Dorsolateral prefrontal cortex (tissue), 120 donors: ENCODE measurements at regions of chr1 and their contacts with region 1.

Region 1: GRCh38 chr1:109910123-109910962 is at the start of gene CSF1:
- DNase-seq: peak; percentile 38 to 86 (median 82)
- H3K4me3 ChIP-seq: peak within 1 kb of the TSS; percentile 53 to 91 (median 80)
- H3K27ac ChIP-seq: peak within 1 kb of the TSS in 57 of 59 donors; percentile 11 to 95 (median 86)
- H3K27me3 ChIP-seq: peaks cover 0 to 4% (median 0%) of the 10 kb centered on the region in 45 donors
- CTCF ChIP-seq: peak in 9 of 56 donors; percentile 5 to 34 (median 12)
- total RNA-seq, gene CSF1: 8.9 to 51.5 (median 20.8) TPM

Region 2: DNA sequence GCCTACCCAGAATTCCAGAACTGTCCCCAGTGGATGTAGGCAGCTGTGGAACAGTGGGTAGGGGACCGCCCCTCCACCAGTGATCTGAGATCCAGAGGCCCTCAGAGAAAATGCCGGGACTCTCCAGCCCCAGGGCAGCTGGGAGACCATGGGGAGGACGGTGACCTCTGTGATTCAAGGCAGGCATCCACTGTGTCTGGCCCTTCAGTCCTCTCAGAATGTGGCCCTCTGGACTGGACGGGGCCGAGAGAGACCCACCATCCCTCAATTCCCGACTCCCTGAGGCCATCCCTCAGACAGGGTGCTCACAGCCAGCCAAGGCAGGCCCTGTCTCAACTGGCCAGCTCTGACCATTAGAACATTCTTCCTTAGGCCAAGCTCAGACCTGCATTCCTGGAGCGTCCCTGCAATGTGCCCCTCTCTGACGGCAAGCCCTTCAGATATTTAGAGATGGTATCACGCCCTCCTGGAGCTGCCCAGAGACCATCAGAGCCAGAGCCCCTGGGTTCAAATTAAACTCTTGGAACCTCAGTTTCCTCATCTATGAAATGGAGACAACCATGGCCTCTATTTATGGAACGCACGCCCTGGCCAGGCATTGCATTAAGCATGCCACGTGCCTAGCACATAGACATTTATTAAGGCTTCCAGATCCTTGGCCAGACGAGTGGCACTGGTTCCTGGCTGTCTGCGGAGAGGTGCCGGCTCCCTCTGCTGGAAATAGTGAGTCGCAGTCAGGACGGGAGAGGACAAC is 137.0 kb before region 1 on chr1:
- intact Hi-C with region 1: loop called in 1 of 2 experiments (anchors 5 kb)
- DNase-seq: peak; percentile 58 to 88 (median 84)
- H3K4me3 ChIP-seq: no peak overlapping the region
- H3K27ac ChIP-seq: peak overlapping the region in 3 of 59 donors; percentile 18 to 49 (median 36)
- H3K27me3 ChIP-seq: no peaks in the 10 kb centered on the region
- CTCF ChIP-seq: peak; percentile 44 to 90 (median 83)

Region 3: DNA sequence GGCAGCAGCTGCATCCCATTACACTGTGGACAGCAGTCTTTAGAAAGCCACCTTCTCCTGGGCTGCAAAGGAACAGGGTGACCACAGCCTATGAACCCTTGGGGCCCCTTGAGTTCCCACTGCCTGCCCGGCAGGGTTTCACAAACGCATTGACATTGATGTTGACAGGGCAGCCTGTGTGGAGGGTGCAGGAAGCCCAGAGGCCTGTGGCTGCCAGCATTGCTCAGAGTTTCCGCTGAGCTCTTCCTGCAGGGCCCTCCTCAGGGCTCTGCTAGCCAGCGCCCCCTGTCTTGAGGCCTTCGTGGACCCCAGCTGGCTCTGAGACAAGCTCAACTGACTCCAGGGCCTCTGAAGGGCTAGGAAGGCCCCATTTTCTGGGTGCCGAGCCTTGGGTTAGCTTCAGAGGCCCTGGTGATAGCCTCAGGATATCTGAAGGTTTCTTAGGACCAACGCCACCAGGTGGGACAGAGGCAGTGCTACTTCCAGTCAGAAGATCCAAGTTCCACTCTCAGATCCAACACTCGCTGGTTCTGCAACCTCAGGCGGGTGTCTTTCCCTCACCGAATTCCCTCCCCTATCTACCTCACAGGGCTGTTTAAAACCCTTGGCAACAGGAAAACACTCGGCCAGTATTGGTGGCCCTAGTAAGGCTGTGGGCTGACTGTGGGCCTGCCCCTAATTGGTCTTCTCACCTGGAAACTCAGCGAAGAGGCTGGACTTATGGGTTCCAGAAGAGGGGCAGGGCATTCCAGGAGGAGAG is 119.4 kb before region 1 on chr1:
- intact Hi-C with region 1: loop called in 1 of 2 experiments (anchors 10 kb)
- DNase-seq: peak in 8 of 10 donors; percentile 15 to 59 (median 37)
- H3K4me3 ChIP-seq: no peak overlapping the region
- H3K27ac ChIP-seq: peak overlapping the region in 9 of 59 donors; percentile 9 to 51 (median 38)
- H3K27me3 ChIP-seq: no peaks in the 10 kb centered on the region
- CTCF ChIP-seq: peak in 42 of 56 donors; percentile 9 to 46 (median 28)

Region 4: GRCh38 chr1:109802901-109803561 is 107.3 kb before region 1 on chr1:
- intact Hi-C with region 1: loop called (anchors 5 to 10 kb)
- DNase-seq: peak in 9 of 10 donors; percentile 14 to 70 (median 53)
- H3K4me3 ChIP-seq: no peak overlapping the region
- H3K27ac ChIP-seq: peak overlapping the region in 57 of 59 donors; percentile 26 to 87 (median 78)
- H3K27me3 ChIP-seq: no peaks in the 10 kb centered on the region
- CTCF ChIP-seq: no peak

Region 5: GRCh38 chr1:109850194-109850593 is 60.1 kb before region 1 on chr1:
- intact Hi-C with region 1: loop called in 1 of 2 experiments (anchors 5 kb)
- DNase-seq: no peak
- H3K4me3 ChIP-seq: no peak overlapping the region
- H3K27ac ChIP-seq: peak overlapping the region in 2 of 59 donors; percentile 9 to 21
- H3K27me3 ChIP-seq: no peaks in the 10 kb centered on the region
- CTCF ChIP-seq: no peak

Region 6: DNA sequence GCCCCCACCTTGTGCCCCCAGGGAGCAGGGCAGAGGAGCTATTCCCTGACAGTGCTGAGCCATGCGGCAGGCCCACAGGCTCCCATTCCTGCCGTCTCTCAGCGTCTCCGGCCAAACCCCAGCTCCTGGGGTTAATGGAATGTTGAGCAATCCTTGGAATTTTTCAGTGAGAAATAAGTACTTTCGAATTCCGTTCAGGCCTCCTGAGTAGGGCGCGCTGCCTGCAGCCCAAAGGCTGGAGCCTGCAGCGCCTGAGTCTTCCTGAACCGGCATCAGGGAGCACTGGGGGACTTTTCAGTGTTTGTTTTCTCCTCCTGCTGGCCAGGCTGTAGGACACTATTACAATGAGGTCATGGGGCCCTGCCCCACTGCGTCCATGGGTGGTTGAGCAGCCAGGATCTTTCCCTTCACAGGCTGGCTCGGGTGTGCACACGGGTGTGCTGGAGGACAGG is 33.0 kb before region 1 on chr1:
- intact Hi-C with region 1: loop called in 1 of 2 experiments (anchors 5 kb)
- DNase-seq: peak in 6 of 10 donors; percentile 40 to 73 (median 58)
- H3K4me3 ChIP-seq: peak overlapping the region in 22 of 59 donors; percentile 2 to 52 (median 17)
- H3K27ac ChIP-seq: peak overlapping the region; percentile 64 to 99 (median 89)
- H3K27me3 ChIP-seq: no peaks in the 10 kb centered on the region
- CTCF ChIP-seq: peak in 43 of 56 donors; percentile 7 to 61 (median 38)